ENCODE measurements at regions of chr12 and their contacts with region 1.

Region 1: GRCh38 chr12:94149119-94149780 is 873 bp downstream of the PLXNC1 start:
- DNase-seq: no peak
- ATAC-seq: peak in 1 of 2 donors; percentile 38
- H3K4me3 ChIP-seq: peak overlapping the region; percentile 43 to 60 (median 60)
- H3K27ac ChIP-seq: no peak overlapping the region
- H3K4me1 ChIP-seq: peaks cover 4 to 5% of the 10 kb centered on the region in 2 donors
- H3K27me3 ChIP-seq: peaks cover 7 to 23% (median 18%) of the 10 kb centered on the region in 3 donors
- CTCF ChIP-seq: no peak
- POLR2A ChIP-seq: no peak

Region 2: DNA sequence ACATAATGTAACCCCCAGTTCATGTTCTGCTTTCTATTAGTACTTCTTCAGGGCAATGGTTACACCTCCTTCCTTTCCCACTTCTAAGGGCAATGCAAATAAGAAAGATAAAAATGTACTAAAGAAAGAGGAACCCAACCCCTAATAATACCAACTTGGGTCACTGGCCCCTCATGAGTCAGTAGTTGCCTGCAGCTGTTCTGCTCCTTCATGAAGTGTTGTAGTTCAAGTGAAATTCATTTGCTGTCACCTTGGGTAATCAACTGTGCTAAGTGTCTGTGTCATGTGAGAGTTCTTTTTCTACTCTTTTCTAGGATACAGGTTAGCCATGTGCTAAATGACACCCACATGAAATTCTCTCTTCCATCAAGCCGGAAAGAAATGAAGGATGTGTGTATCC is 90.9 kb after region 1 on chr12:
- in situ Hi-C with region 1: no loop called
- intact Hi-C with region 1: no loop called
- DNase-seq: no peak
- ATAC-seq: no peak
- H3K4me3 ChIP-seq: no peak overlapping the region
- H3K27ac ChIP-seq: no peak overlapping the region
- H3K4me1 ChIP-seq: peaks cover 0 to 9% of the 10 kb centered on the region in 2 donors
- H3K27me3 ChIP-seq: no peaks in the 10 kb centered on the region
- CTCF ChIP-seq: no peak
- POLR2A ChIP-seq: no peak

Region 3: DNA sequence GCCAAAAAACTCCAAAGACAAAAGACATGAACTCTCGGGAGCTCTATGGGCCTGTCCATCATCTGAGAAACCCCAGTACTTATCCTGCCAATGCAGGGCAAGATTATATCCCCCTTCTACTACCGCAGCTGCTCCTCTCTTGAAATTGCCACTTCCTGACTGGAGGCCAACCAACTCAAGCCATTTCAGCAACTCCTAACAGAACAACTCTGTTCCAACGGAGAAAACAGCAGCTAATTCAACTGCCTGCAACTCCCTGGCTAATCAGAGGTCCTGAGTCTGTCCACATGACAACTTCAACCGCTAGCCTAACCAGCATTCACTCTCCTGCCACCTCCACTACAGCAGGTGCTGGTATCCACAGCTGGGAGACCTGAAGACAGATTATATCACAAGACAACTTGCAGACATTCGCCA is 286.3 kb after region 1 on chr12:
- in situ Hi-C with region 1: loop called in 1 of 4 experiments (anchors 25 kb)
- intact Hi-C with region 1: loop called (anchors 5 kb)
- DNase-seq: no peak
- ATAC-seq: peak; percentile 30 to 41
- H3K4me3 ChIP-seq: no peak overlapping the region
- H3K27ac ChIP-seq: no peak overlapping the region
- H3K4me1 ChIP-seq: peaks cover 10 to 13% of the 10 kb centered on the region in 2 donors
- H3K27me3 ChIP-seq: no peaks in the 10 kb centered on the region
- CTCF ChIP-seq: no peak
- POLR2A ChIP-seq: no peak

Measured in gastrocnemius medialis (tissue), 4 donors.